ENCODE measurements at regions of chr11 and their contacts with region 1.

Region 1: DNA sequence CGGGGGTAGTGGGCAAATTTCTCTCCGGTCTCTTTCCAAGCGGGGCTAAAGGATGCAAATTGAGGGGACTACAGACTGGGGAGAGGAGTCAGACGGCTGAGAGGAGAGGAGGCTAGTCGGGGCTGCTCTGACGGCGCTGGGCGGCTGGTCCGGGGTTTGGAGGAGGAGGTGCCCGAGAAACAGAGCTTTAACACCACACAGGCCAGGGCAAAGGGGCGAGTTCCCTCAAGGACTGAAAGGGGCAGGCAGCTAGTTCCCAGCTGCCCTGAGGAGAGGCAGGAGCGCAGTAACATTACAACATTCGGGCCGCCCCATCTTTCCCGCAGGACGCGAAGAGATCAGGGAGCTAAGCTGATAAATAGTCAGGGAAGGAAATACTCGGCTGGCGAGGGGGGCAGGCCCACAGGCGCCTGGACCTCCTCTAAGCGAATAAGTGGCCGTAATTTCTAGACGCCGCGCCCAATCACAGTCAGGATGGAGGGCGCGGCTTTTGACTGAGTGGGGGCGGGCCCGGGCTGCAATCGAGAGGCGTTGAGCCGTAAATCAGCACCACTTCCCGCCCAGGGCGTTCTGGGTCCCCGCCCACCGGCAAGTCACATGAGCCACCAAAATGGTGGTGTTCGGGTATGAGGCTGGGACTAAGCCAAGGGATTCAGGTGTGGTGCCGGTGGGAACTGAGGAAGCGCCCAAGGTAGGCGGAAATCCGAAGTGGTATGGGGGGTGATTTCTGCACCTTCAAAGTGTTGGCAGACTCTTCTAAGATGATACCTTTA is at the start of gene TMEM126B:
- DNase-seq: peak; percentile 98
- ATAC-seq: peak; percentile 99
- total RNA-seq, gene TMEM126B: 68.0 TPM

Region 2: DNA sequence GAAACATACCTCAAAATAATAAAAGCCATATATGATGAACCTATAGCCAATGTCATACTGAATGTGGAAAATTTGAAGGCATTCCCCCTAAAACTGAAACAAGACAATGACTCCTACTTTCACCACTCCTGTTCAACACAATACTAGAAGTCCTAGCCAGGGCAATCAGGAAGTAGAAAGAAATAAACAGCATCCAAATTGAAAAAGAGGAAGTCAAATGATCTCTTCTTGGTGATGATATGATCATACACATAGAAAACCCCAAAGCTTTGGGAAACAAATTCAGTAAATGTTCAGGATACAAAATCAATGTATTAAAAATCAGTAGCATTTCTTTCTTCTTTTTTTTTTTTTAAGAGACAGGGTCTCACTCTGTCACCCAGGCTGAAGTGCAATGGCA is 110.9 kb before region 1 on chr11:
- intact Hi-C with region 1: no loop called
- DNase-seq: no peak
- ATAC-seq: no peak

Region 3: GRCh38 chr11:85558411-85558810 is 69.8 kb before region 1 on chr11:
- intact Hi-C with region 1: no loop called
- DNase-seq: no peak
- ATAC-seq: no peak

Region 4: DNA sequence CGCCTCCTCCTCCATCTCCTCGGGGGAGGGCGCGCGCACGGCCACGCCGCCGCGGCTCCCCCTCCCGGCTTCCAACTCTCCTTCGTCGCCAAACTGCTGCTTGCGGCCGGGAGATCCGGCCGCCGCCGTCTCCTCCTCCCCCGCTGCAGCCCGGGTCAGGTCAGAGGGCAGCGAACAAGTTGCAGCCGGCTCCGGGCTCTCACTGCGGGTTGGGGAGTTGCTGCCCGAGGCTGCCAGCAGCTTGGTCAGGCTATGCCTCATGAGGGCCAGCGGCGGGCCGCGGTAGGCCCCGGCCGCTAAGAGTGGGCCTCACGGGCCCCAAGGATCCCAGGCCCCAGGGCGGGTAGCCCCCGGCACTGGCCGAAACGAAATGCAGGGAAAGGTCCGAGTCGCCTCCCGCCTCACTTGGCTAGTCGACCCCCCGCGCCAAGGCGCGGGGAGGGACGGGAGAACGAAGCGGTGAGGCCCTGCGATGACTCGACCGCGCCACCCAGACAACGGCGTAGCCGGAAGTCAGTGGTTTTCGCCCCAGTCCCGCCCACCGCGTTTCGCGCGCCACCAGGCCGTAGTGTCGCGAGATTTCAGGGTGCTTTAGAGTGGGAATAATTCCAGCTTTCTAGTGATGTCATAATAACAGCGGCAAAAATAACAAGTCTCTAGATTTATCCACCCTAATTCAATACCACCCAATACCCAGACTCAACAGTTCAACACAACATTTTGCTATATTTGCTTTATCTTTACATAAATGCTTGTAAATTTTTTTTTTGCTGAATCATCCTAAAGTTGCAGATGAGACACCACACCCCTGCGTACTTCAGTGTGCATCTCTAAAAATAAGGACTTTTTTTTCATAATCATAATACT is 36.7 kb after region 1 on chr11 and contains the start of gene CREBZF:
- intact Hi-C with region 1: loop called (anchors 5 kb)
- DNase-seq: peak; percentile 96
- ATAC-seq: peak; percentile 97
- total RNA-seq, gene CREBZF: 12.9 TPM